ENCODE measurements at regions of chr9 and their contacts with region 1.

Region 1: DNA sequence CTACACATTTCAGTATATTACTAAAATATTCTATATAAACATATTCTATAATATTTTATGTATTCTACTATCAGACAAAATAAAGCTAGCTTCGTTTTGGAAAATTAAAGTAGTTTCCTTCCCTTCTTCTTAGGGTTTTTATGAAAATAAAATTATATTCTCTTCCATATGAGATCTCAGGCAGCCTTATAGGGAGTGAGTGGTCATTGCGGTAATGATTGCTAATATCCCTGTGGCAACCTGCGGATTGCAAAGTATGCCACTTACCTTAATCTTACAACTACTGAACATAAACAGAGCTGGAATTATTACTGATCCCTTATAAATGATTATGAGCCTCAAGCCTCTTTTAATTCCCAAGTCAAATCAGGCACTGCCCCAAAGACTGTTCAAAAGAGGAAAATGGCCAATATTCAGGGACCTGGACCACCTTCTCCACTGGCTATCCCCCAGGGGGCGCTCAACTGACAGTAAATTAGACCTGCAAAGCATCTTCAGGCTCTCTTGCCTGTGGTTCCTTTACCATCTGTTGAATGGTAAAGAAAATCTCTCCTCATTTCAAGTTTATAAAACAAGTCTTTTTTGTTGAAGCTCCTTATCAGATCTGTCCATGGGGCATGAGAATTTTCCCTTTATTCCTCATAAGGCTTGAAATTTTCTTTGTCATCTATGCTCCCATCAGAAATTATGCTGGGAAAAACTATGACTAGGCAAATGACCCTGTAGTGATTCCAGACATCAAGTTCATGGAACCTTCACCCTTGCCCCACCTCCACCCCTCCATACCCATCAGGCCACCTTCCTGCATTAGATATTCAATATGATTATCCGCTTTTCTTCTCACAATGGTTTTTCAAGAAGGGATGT is 163.9 kb downstream of the CEMIP2 start:
- DNase-seq: peak; percentile 80
- H3K4me3 ChIP-seq: no peak overlapping the region
- H3K27ac ChIP-seq: no peak overlapping the region
- H3K4me1 ChIP-seq: peaks cover 19% of the 10 kb centered on the region
- H3K27me3 ChIP-seq: no peaks in the 10 kb centered on the region

Region 2: GRCh38 chr9:71549023-71549422 is 55.4 kb before region 1 on chr9:
- in situ Hi-C with region 1: no loop called
- DNase-seq: no peak
- H3K4me3 ChIP-seq: no peak overlapping the region
- H3K27ac ChIP-seq: no peak overlapping the region
- H3K4me1 ChIP-seq: no peaks in the 10 kb centered on the region
- H3K27me3 ChIP-seq: peaks cover 11% of the 10 kb centered on the region

Region 3: GRCh38 chr9:71703172-71703872 is 98.9 kb after region 1 on chr9:
- in situ Hi-C with region 1: loop called (anchors 10 kb)
- DNase-seq: peak; percentile 54
- H3K4me3 ChIP-seq: no peak overlapping the region
- H3K27ac ChIP-seq: no peak overlapping the region
- H3K4me1 ChIP-seq: peaks cover 6% of the 10 kb centered on the region
- H3K27me3 ChIP-seq: no peaks in the 10 kb centered on the region

Region 4: DNA sequence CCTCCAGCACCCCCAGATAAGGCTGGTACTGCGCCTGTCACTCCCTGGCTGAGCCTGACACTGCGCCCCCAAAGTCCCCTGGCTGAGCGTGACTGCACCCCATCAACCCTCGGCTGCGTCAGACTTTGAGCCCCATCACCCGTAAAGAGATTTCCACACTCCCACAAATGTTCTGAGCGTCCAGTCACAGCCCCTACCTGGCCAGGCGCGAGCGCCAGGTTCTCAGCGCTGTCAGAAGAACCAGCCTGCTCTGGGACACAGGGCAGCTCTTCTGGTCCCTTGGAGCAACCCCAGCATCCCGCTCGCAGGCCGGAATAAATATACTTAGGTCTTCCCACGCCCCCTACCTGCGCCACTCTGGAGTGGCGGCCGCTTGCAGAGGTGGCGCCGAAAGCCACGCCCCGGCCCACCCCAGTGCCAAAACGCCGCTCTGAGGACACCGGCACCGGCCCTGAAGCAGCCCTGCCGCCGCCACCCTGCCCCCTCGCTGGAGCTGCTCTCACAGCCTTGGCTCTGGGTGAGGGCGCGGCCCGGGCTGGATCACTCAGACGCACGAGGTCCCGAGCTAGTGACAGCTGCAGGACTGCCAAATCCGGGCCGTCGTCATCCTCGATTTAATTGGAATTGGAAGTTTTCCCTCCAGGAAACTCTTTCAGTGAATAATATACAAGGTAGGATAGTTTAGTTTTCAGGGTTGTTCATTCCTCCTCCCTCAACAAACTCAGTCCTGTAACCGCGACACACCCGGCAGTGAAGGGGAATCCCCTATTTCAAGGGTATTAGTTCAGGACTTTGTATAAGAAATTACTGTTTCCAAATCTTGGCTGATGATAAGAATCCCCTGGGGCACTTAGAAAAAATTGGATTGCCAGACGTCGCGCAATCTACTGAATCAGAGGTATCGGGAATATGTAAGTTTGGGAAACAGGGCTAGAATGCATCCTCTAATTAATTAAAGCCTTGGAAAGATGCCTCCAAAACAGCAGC is 165.0 kb after region 1 on chr9:
- in situ Hi-C with region 1: loop called (anchors 10 kb)
- DNase-seq: peak; percentile 86
- H3K4me3 ChIP-seq: peak overlapping the region; percentile 100
- H3K27ac ChIP-seq: no peak overlapping the region
- H3K4me1 ChIP-seq: peaks cover 35% of the 10 kb centered on the region
- H3K27me3 ChIP-seq: no peaks in the 10 kb centered on the region

Region 5: DNA sequence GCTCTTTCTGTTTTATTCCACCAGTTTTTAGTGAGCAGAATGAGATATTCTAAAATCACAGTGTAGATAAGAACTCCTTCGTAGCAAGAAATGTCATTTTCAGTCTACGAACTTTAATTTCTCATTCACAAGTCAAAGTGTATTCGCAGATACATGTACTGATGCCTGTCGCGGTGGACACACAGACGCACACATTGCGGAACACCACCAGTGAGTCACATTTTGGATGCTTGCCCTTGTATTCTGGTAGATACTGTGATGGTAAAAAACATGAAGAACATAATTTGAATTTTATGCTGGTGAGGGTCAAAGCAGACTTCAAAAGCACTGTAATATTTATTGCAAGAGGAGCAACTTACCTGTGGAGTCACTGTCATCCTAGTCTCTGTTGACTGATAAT is 460.6 kb after region 1 on chr9:
- in situ Hi-C with region 1: no loop called
- DNase-seq: no peak
- H3K4me3 ChIP-seq: no peak overlapping the region
- H3K27ac ChIP-seq: no peak overlapping the region
- H3K4me1 ChIP-seq: no peaks in the 10 kb centered on the region
- H3K27me3 ChIP-seq: peaks cover 3% of the 10 kb centered on the region; the same call in 1 of the 2 replicates